Activated T-helper 1 cell treated with anti-CD3 and anti-CD28 coated beads, Interleukin-12 subunit alpha, Interleukin-12 subunit beta, Interleukin-2, Interleukin-4 antibody, amounts not matched to agents 30 ng/mL and 10 ng/mL and 1 ng/mL, durations not matched to agents 14 hours and 24 hours and 36 hours (primary cell): ENCODE measurements at regions of chr9 and their contacts with region 1.

Region 1: GRCh38 chr9:78035383-78035993 is 3.9 kb upstream of the GNAQ start:
- DNase-seq: peak; percentile 38
- H3K4me3 Mint-ChIP-seq: no peak overlapping the region
- H3K27ac Mint-ChIP-seq: peak overlapping the region; percentile 12
- H3K4me1 Mint-ChIP-seq: peaks cover 37% of the 10 kb centered on the region
- H3K27me3 Mint-ChIP-seq: no peaks in the 10 kb centered on the region

Region 2: GRCh38 chr9:77433675-77434445 is 601.6 kb before region 1 on chr9:
- intact Hi-C with region 1: loop called (anchors 2 kb)
- DNase-seq: peak; percentile 15
- H3K4me3 Mint-ChIP-seq: no peak overlapping the region
- H3K27ac Mint-ChIP-seq: no peak overlapping the region
- H3K4me1 Mint-ChIP-seq: peaks cover 5% of the 10 kb centered on the region
- H3K27me3 Mint-ChIP-seq: peaks cover 3% of the 10 kb centered on the region

Region 3: DNA sequence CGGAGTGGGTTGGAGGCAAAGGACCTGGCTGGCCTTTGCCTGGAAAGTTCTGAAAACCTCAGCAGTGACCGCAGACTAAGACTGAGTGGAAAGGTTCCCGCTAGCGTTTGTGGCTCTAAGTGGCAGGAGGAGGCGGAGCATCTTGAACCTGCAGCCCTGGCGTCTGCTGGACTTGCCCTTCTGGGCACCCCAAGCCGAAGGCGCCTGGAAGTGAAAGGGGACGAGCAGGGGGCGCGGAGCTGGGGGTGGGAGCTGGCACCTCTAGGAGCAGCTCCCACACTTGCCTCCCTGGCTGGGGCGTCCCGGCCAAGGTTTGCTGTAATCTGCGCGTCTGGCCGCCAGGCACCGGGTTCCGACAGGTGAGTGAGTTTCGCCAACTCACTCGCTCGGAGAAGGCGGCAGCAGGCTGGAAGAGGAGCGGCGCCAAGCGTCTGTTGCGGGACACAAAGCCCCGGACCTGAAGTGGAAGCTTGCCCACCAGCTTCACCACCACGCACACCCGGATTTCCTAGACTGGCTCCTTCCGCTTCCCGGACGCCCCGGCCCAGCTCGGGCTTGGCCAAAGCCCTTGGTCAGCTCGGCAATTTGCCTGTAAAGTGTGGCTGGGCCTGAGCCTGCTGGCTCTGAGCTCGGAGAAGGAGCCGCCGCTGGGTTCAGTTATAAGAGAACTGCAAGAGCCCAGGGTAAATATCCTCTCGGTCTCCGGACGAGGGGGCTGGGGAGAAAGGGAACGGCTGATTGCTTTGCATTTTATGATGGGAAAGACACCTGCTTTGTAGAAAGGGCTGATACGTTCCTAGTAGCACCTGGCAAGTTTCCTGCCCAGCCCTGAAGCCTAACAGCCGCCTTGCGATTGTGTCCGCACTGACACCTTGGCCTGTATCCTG is 387.0 kb before region 1 on chr9 and contains the start of gene GNA14:
- intact Hi-C with region 1: loop called (anchors 10 kb)
- DNase-seq: no peak
- H3K4me3 Mint-ChIP-seq: peak within 1 kb of the TSS; percentile 68
- H3K27ac Mint-ChIP-seq: peak within 1 kb of the TSS; percentile 23
- H3K4me1 Mint-ChIP-seq: peaks cover 4% of the 10 kb centered on the region
- H3K27me3 Mint-ChIP-seq: peaks cover 56% of the 10 kb centered on the region
- total RNA-seq, gene GNA14: not detected in 2 replicates

Region 4: DNA sequence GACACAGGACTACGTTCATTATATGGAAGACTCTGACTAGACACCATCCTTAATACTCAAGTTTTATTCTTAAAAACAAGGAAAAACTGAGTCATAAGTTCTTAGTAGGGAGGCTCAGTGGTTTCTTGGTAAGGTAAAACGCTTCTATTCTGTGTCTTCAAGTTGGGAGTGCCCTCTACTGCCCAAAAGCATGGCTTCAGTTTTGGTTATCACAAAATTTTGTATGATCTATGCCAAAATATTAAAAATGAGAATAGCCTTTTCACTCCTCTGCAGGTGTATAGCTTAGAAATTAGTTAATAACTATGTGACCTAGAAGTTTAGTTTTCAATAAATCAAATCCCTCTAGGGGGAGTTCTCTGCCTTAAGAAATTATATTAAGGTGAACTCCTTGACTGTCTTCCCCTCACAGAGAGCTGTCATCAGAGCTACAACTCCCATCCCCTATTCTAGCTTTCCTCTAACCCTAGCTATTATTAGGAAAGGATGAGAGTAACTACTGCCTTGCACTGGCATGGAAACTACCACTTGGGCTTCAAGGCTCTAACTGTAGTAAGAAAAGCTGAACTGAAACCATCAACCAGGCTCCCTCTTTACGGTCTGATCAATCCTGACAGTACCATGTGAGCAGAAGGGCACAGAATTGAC is 193.6 kb before region 1 on chr9:
- intact Hi-C with region 1: loop called (anchors 1 kb)
- DNase-seq: no peak
- H3K4me3 Mint-ChIP-seq: no peak overlapping the region
- H3K27ac Mint-ChIP-seq: peak overlapping the region; percentile 45
- H3K4me1 Mint-ChIP-seq: peaks cover 27% of the 10 kb centered on the region
- H3K27me3 Mint-ChIP-seq: no peaks in the 10 kb centered on the region

Region 5: GRCh38 chr9:77977210-77977611 is 58.3 kb before region 1 on chr9:
- intact Hi-C with region 1: loop called (anchors 1 kb)
- DNase-seq: peak; percentile 34
- H3K4me3 Mint-ChIP-seq: peak overlapping the region; percentile 40
- H3K27ac Mint-ChIP-seq: peak overlapping the region; percentile 81
- H3K4me1 Mint-ChIP-seq: peaks cover 51% of the 10 kb centered on the region
- H3K27me3 Mint-ChIP-seq: no peaks in the 10 kb centered on the region

Region 6: GRCh38 chr9:78235756-78236538 is 200.5 kb after region 1 on chr9 and contains the start of gene CEP78:
- intact Hi-C with region 1: loop called (anchors 1 kb)
- DNase-seq: peak; percentile 85
- H3K4me3 Mint-ChIP-seq: no peak within 1 kb of the TSS
- H3K27ac Mint-ChIP-seq: peak within 1 kb of the TSS; percentile 92
- H3K4me1 Mint-ChIP-seq: peaks cover 31% of the 10 kb centered on the region
- H3K27me3 Mint-ChIP-seq: no peaks in the 10 kb centered on the region
- total RNA-seq, gene CEP78: 35.2 and 41.1 TPM in 2 replicates